WTC11 (cell line): ENCODE measurements at regions of chr15 and their contacts with region 1.

Region 1: DNA sequence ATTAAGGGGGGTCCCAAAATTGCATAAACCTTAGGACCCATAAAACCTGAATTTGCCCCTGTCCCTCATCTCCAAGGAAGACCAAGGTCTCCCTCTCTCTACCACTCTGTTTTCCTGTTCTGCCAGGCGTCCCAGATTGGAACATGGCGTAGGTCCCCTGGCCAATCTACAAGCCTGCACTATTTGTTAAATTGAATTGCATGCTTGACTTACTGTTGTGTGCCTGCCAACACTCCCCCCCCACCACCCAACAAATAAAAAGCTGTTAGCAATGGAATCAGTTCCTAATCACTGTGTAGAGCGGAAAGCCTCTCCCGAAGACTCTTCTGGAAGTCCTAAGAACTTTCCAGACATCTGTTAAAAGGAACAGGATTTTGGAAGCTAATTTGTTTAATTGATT is 11.7 kb downstream of the CTXND1 start:
- DNase-seq: no peak
- ATAC-seq: no peak
- H3K4me3 Mint-ChIP-seq: no peak overlapping the region
- H3K27ac Mint-ChIP-seq: no peak overlapping the region
- H3K4me1 Mint-ChIP-seq: peaks cover 8% of the 10 kb centered on the region
- H3K27me3 Mint-ChIP-seq: peaks cover 4% of the 10 kb centered on the region; the same call in 1 of the 2 replicates
- CTCF ChIP-seq: no peak

Region 2: DNA sequence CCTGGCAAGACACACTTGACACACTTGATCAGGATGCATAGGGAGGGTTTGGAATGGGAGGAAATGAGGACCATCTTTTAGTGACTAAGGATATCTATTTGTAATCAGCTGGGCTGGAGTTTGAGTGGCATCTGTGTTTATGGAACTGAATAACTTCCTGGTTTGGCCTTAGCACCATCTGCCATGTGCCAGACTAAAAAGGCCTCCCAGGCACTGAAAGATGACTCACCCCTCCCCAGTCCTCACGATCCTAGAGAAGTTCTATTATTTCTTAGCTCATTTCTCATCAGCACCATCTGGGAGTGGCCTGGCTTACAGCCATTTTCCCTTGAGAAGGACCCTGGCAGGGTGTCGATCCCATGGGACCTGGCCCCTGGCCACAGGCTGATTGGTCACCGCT is 35.7 kb after region 1 on chr15:
- CTCF ChIA-PET with region 1: no interaction called
- POLR2A ChIA-PET with region 1: no interaction called
- DNase-seq: no peak
- ATAC-seq: no peak
- H3K4me3 Mint-ChIP-seq: no peak overlapping the region
- H3K27ac Mint-ChIP-seq: no peak overlapping the region
- H3K4me1 Mint-ChIP-seq: peaks cover 3% of the 10 kb centered on the region; the same call in 1 of the 2 replicates
- H3K27me3 Mint-ChIP-seq: no peaks in the 10 kb centered on the region; the same call in 1 of the 2 replicates
- CTCF ChIP-seq: no peak

Region 3: DNA sequence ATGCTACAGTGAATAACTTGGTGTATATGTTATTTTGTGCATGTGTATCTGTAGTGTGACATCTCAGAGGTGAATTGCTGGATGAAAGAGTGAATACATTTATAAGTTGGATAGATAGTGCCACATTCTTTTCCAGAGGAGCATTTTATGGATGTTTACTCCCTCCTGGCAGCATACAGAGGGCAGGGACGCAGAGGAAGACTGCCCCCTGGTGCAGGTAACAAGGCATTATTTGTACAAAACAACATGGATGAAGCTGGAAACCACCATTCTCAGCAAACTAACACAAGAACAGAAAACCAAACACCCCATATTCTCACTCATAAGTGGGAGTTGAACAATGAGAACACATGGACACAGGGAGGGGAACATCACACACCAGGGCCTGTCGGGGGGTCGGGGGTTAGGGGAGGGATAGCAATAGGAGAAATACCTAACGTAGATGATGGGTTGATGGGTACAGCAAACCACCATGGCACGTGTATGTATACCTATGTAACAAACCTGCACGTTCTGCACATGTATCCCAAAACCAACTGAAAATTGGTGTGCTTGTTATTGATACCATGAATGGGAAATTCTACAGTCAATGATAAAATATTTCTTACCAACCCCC is 69.6 kb after region 1 on chr15:
- CTCF ChIA-PET with region 1: interaction called, 10 read pairs
- POLR2A ChIA-PET with region 1: no interaction called
- DNase-seq: peak; percentile 35
- ATAC-seq: peak; percentile 68
- H3K4me3 Mint-ChIP-seq: no peak overlapping the region
- H3K27ac Mint-ChIP-seq: no peak overlapping the region
- H3K4me1 Mint-ChIP-seq: no peaks in the 10 kb centered on the region
- H3K27me3 Mint-ChIP-seq: no peaks in the 10 kb centered on the region
- CTCF ChIP-seq: peak; percentile 74